Activated CD4-positive, alpha-beta T cell treated with anti-CD3 and anti-CD28 coated beads, Interleukin-2, amount 10 ng/mL, durations not matched to agents 7 days and 5 days (primary cell): ENCODE measurements at regions of chr1 and their contacts with region 1.

Region 1: GRCh38 chr1:154335025-154335714 is 9.8 kb downstream of the ATP8B2 start:
- DNase-seq: peak; percentile 95
- H3K4me3 Mint-ChIP-seq: peak overlapping the region; percentile 44
- H3K27ac Mint-ChIP-seq: peak overlapping the region; percentile 86
- H3K4me1 Mint-ChIP-seq: peaks cover 86% of the 10 kb centered on the region
- H3K27me3 Mint-ChIP-seq: no peaks in the 10 kb centered on the region

Region 2: DNA sequence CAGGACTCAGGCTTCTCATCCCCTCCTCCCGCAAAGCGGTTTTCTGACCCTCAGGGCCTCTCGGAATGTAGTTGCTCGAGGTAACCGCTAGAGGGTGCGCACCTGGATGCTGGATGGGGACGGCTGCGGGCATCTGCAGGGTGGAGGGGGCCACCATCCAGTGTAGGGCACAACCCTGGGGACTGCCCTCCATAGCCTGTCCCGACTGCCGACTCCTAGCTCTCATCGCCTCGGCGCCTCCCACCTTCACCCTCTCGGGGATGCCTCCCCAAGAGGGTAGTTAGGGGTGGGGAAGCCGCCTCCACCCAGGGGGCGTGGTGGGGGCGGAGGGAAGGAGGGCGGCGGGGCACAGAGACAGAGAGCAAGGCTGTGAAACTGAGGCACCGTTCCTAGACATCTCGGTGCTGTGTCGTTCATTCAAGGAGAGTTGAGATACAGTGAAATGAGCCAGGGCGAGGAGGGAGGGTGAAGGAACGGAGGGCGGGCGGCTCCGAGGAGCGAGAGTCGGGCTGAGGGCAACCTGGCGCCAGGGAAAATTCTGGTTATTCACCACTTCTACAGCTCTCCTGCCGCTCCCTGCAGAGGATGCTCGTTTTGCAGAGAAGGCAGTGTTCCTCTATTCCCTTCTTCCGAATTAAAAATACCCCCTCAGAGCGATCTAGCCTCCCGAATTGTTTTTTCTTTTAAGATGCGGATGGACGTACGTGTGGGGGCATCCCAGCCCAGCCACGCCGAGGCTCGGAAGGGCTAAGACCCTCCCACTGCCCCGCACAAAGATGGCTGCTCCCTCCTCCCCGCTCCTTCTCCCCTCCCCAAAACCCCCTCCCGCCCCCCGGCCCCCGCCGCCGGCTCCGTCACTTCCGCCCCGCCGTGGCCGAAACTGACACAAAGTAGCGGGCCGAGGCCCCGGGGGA is 10.2 kb before region 1 on chr1 and contains the start of gene ATP8B2:
- CTCF ChIA-PET with region 1: interaction called, 71 read pairs
- POLR2A ChIA-PET with region 1: interaction called, 3 read pairs
- DNase-seq: peak; percentile 85
- H3K4me3 Mint-ChIP-seq: peak within 1 kb of the TSS; percentile 93
- H3K27ac Mint-ChIP-seq: peak within 1 kb of the TSS; percentile 91
- H3K4me1 Mint-ChIP-seq: peaks cover 40% of the 10 kb centered on the region
- H3K27me3 Mint-ChIP-seq: peaks cover 19% of the 10 kb centered on the region
- total RNA-seq, gene ATP8B2: 135 to 138 TPM

Region 3: GRCh38 chr1:154344977-154345837 is 10.0 kb after region 1 on chr1:
- CTCF ChIA-PET with region 1: interaction called, 42 read pairs
- POLR2A ChIA-PET with region 1: no interaction called
- DNase-seq: peak; percentile 78
- H3K4me3 Mint-ChIP-seq: peak overlapping the region; percentile 51
- H3K27ac Mint-ChIP-seq: peak overlapping the region; percentile 58
- H3K4me1 Mint-ChIP-seq: peaks cover 67% of the 10 kb centered on the region
- H3K27me3 Mint-ChIP-seq: no peaks in the 10 kb centered on the region

Region 4: DNA sequence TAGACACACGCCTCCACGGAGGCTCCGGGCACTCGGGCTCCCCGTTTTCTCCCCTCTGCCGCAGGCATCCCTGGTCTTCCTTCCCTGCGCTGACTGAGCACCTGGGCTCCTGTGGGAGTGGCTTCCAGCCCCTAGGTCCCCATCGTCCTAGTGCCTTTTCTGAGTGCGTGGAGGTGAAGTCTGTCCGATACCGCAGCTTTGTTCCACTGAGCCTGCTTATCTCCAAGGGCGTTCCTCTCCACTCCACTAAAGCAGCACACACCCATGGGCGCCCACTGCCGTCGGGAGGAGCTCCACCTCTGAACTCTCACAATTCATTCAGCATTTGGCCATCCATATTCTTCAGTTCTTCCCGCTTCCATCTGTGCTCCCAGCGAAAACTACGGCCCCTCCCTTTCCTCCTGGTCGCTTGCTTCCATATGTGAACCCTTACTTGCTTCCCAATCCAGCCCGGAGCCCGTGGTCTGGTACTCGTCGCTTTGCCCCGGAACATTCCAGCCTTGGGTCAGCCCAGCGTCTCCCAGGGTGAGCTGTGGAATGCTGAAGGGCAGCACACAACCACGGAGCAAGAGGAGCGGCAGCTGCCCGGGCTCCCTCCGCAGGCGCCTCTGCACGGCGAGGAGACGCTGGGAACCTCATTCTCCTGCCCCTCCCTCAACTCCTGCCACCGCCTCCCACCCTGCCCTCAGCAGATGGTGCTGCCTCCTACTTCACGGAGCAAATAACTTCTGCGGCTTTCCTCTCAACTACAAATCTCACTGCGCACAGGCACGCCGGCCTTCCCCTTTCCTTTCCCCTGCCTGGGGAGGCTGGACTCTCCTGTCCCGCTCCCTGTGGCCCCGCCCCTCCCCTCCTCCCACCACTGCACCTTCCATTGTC is 17.6 kb after region 1 on chr1:
- CTCF ChIA-PET with region 1: interaction called, 42 read pairs
- POLR2A ChIA-PET with region 1: no interaction called
- DNase-seq: peak; percentile 52
- H3K4me3 Mint-ChIP-seq: peak overlapping the region; percentile 67
- H3K27ac Mint-ChIP-seq: peak overlapping the region; percentile 77
- H3K4me1 Mint-ChIP-seq: peaks cover 34% of the 10 kb centered on the region
- H3K27me3 Mint-ChIP-seq: peaks cover 7% of the 10 kb centered on the region